ENCODE measurements at regions of chr2 and their contacts with region 1.

Region 1: GRCh38 chr2:233711312-233712008 is 1.2 kb upstream of the UGT1A5 start:
- DNase-seq: peak; percentile 64
- ATAC-seq: peak; percentile 99
- H3K4me3 ChIP-seq: no peak overlapping the region
- H3K27ac ChIP-seq: no peak overlapping the region
- H3K4me1 ChIP-seq: no peaks in the 10 kb centered on the region
- H3K27me3 ChIP-seq: no peaks in the 10 kb centered on the region
- CTCF ChIP-seq: peak; percentile 94
- EP300 ChIP-seq: no peak
- POLR2A ChIP-seq: no peak
- RAD21 ChIP-seq: peak; percentile 86

Region 2: GRCh38 chr2:233404222-233404621 is 307.2 kb before region 1 on chr2:
- CTCF ChIA-PET with region 1: no interaction called
- POLR2A ChIA-PET with region 1: no interaction called
- in situ Hi-C with region 1: no loop called
- intact Hi-C with region 1: loop called (anchors 5 kb)
- DNase-seq: peak; percentile 48
- ATAC-seq: peak; percentile 76
- H3K4me3 ChIP-seq: no peak overlapping the region
- H3K27ac ChIP-seq: no peak overlapping the region
- H3K4me1 ChIP-seq: no peaks in the 10 kb centered on the region
- H3K27me3 ChIP-seq: no peaks in the 10 kb centered on the region
- CTCF ChIP-seq: peak; percentile 69
- EP300 ChIP-seq: no peak
- POLR2A ChIP-seq: no peak
- RAD21 ChIP-seq: no peak

Region 3: GRCh38 chr2:233449081-233449901 is 262.2 kb before region 1 on chr2:
- CTCF ChIA-PET with region 1: no interaction called
- POLR2A ChIA-PET with region 1: no interaction called
- in situ Hi-C with region 1: no loop called
- intact Hi-C with region 1: loop called (anchors 5 kb)
- DNase-seq: no peak
- ATAC-seq: peak; percentile 19
- H3K4me3 ChIP-seq: no peak overlapping the region
- H3K27ac ChIP-seq: no peak overlapping the region
- H3K4me1 ChIP-seq: peaks cover 10% of the 10 kb centered on the region
- H3K27me3 ChIP-seq: no peaks in the 10 kb centered on the region
- CTCF ChIP-seq: peak; percentile 47
- EP300 ChIP-seq: no peak
- POLR2A ChIP-seq: no peak
- RAD21 ChIP-seq: no peak

Region 4: DNA sequence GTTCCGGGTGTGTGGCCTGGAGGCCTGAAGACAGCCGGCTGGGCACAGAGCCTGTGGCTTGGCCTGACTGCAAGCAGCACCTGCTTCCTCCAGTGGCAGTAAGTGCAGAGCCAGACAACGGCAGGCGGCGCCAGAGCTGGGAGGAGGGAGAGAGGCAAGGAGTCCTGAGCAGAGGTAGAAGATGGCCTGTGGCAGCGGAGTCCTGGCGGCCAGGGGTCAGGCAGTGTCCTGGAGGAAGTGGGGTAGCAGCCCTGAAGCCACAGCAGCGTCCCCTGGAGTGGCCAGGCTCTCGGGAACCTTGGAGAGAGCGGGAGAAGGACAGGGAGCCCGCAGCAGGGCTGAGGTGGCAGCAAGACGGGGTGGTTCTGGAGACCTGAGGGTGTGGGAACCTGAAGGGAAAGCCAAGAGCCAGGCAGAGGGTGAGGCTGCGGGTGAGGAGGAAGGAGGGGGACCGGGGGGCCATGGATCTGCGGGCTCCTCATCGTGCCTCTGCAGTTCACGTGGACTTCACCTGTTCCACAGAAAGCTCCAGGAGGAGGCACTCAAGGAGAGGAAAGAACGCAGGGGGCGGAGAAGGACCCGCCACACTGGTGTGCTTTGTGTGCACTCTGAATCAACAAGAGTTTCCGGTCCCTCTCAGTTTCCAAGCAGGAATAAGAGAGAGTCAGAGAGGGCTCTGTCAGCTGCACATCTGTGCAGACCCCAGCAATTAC is 230.8 kb before region 1 on chr2:
- CTCF ChIA-PET with region 1: no interaction called
- POLR2A ChIA-PET with region 1: no interaction called
- in situ Hi-C with region 1: no loop called
- intact Hi-C with region 1: loop called (anchors 2 kb)
- DNase-seq: peak; percentile 18
- ATAC-seq: peak; percentile 8; the same call in 2 of the 3 replicates
- H3K4me3 ChIP-seq: no peak overlapping the region
- H3K27ac ChIP-seq: no peak overlapping the region
- H3K4me1 ChIP-seq: no peaks in the 10 kb centered on the region
- H3K27me3 ChIP-seq: no peaks in the 10 kb centered on the region
- CTCF ChIP-seq: 0 out of 2 replicates have a peak, but pooled peaks have one; percentile 19
- EP300 ChIP-seq: no peak
- POLR2A ChIP-seq: no peak
- RAD21 ChIP-seq: no peak

Region 5: GRCh38 chr2:233584210-233584729 is 127.2 kb before region 1 on chr2:
- CTCF ChIA-PET with region 1: no interaction called
- POLR2A ChIA-PET with region 1: no interaction called
- in situ Hi-C with region 1: no loop called
- intact Hi-C with region 1: loop called (anchors 5 kb)
- DNase-seq: no peak
- ATAC-seq: peak; percentile 67
- H3K4me3 ChIP-seq: no peak overlapping the region
- H3K27ac ChIP-seq: no peak overlapping the region
- H3K4me1 ChIP-seq: no peaks in the 10 kb centered on the region
- H3K27me3 ChIP-seq: peaks cover 0 to 2% of the 10 kb centered on the region in 2 experiments; a peak in 1 of 5 replicates
- CTCF ChIP-seq: no peak
- EP300 ChIP-seq: no peak
- POLR2A ChIP-seq: no peak
- RAD21 ChIP-seq: no peak